ENCODE measurements at regions of chr16 and their contacts with region 1.

Region 1: DNA sequence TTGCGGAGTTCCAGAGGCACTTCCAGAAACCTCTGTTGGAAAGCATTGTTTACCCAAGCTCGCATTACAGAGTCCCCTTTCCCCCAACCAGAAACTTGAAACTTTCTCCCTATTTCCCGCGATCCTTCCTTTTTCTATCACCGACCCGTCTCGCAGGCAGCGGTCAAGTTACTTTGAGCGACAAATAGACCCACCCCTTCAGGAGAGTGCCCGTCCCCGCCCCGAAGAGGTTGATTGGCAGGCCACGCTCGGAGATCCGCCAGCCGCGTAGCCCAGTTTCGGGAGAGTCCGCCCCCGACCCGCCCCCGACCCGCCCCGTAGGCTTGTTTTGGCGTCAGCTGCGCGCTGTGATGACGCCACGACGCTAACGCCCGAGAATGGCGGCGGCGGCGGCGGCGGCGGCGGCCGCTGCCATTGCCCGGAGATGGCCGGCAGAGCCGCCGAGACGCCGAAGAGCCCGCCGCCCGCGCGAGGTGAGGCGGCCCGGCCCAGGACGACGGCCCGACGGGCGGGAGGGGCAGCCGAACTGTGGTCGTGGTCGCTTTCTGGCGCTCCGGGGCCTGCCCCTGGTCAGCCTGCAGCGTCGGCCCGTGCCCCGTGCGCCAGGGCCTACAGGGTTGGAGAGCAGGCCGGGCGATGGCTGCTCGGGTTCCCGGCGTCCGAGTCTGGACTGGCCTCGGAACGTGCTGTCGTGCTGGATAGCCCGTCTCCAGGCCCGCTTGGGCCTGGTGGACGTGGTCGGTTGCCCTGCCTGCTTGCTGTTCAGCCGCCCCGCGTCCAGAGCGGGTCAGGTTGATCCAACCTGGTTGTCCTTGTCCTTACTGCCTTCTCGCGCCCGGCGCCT is at the start of gene PSKH1:
- DNase-seq: peak; percentile 95
- ATAC-seq: peak; percentile 94
- H3K4me3 ChIP-seq: peak within 1 kb of the TSS; percentile 93 to 99 (median 98)
- H3K27ac ChIP-seq: peak within 1 kb of the TSS; percentile 90
- H3K4me1 ChIP-seq: peaks cover 43% of the 10 kb centered on the region
- H3K27me3 ChIP-seq: no peaks in the 10 kb centered on the region; a peak in 1 of 5 replicates
- CTCF ChIP-seq: peak; percentile 12; the same call in 1 of the 2 replicates
- EP300 ChIP-seq: no peak
- POLR2A ChIP-seq: peak; percentile 46 to 66; a peak in 3 of 4 replicates
- RAD21 ChIP-seq: peak; percentile 67
- total RNA-seq, gene PSKH1: 8.4 and 12.9 TPM in 2 replicates

Region 2: GRCh38 chr16:67872786-67873537 is 20.2 kb before region 1 on chr16 and contains the start of gene EDC4:
- CTCF ChIA-PET with region 1: no interaction called
- POLR2A ChIA-PET with region 1: interaction called, 4 read pairs
- in situ Hi-C with region 1: no loop called
- intact Hi-C with region 1: loop called (anchors 1 kb)
- DNase-seq: peak; percentile 65
- ATAC-seq: peak; percentile 87
- H3K4me3 ChIP-seq: peak within 1 kb of the TSS; percentile 85 to 98 (median 87)
- H3K27ac ChIP-seq: peak within 1 kb of the TSS; percentile 66
- H3K4me1 ChIP-seq: peaks cover 30% of the 10 kb centered on the region
- H3K27me3 ChIP-seq: no peaks in the 10 kb centered on the region; a peak in 1 of 5 replicates
- CTCF ChIP-seq: peak; percentile 43
- EP300 ChIP-seq: peak in 1 of 2 experiments; percentile 71; a peak in 3 of 4 replicates
- POLR2A ChIP-seq: peak; percentile 68 to 87
- RAD21 ChIP-seq: peak; percentile 83
- total RNA-seq, gene EDC4: 53.4 and 59.1 TPM in 2 replicates

Region 3: GRCh38 chr16:67915831-67916723 is 23.0 kb after region 1 on chr16:
- CTCF ChIA-PET with region 1: no interaction called
- POLR2A ChIA-PET with region 1: interaction called, 10 read pairs
- in situ Hi-C with region 1: no loop called
- intact Hi-C with region 1: no loop called
- DNase-seq: peak; percentile 59
- ATAC-seq: peak; percentile 87
- H3K4me3 ChIP-seq: no peak overlapping the region
- H3K27ac ChIP-seq: peak overlapping the region; percentile 44
- H3K4me1 ChIP-seq: peaks cover 34% of the 10 kb centered on the region
- H3K27me3 ChIP-seq: no peaks in the 10 kb centered on the region
- CTCF ChIP-seq: no peak
- EP300 ChIP-seq: no peak; a peak in 1 of 4 replicates
- POLR2A ChIP-seq: no peak
- RAD21 ChIP-seq: no peak

Region 4: DNA sequence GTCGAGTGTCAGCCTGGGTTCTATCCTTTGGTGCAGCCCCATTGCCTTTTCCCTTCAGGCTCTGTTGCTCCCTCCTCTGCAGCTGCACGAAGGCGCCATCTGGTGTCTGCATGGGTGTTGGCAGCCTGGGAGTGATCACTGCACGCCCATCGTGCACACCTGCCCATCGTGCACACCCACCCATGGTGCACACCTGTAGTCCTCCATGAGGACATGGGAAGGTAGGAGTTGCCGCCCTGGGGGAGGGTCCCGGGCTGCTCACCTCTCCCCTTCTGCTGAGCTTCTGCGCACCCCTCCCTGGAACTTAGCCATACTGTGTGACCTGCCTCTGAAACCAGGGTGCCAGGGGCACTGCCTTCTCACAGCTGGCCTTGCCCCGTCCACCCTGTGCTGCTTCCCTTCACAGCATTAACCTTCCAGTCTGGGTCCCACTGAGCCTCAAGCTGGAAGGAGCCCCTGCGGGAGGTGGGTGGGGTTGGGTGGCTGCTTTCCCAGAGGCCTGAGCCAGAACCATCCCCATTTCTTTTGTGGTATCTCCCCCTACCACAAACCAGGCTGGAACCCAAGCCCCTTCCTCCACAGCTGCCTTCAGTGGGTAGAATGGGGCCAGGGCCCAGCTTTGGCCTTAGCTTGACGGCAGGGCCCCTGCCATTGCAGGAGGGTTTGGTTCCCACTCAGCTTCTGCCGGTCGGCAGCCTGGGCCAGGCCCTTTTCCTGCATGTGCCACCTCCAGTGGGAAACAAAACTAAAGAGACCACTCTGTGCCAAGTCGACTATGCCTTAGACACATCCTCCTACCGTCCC is 35.6 kb after region 1 on chr16:
- CTCF ChIA-PET with region 1: interaction called, 3 read pairs
- POLR2A ChIA-PET with region 1: interaction called, 32 read pairs
- in situ Hi-C with region 1: loop called (anchors 5 kb)
- intact Hi-C with region 1: loop called (anchors 2 kb)
- DNase-seq: peak; percentile 69
- ATAC-seq: peak; percentile 71
- H3K4me3 ChIP-seq: no peak overlapping the region
- H3K27ac ChIP-seq: no peak overlapping the region
- H3K4me1 ChIP-seq: peaks cover 3% of the 10 kb centered on the region
- H3K27me3 ChIP-seq: no peaks in the 10 kb centered on the region
- CTCF ChIP-seq: peak; percentile 99
- EP300 ChIP-seq: no peak
- POLR2A ChIP-seq: 0 out of 4 replicates have a peak, but pooled peaks of 1 of the 2 experiments have one; percentile 8
- RAD21 ChIP-seq: peak; percentile 98

Region 5: GRCh38 chr16:68737046-68737729 is 844.1 kb after region 1 on chr16 and contains the start of gene CDH1:
- CTCF ChIA-PET with region 1: no interaction called
- POLR2A ChIA-PET with region 1: no interaction called
- in situ Hi-C with region 1: no loop called
- intact Hi-C with region 1: no loop called
- DNase-seq: no peak
- ATAC-seq: peak; percentile 48
- H3K4me3 ChIP-seq: peak within 1 kb of the TSS; percentile 48 to 78 (median 60)
- H3K27ac ChIP-seq: no peak within 1 kb of the TSS
- H3K4me1 ChIP-seq: peaks cover 91% of the 10 kb centered on the region
- H3K27me3 ChIP-seq: peaks cover 1 to 26% of the 10 kb centered on the region in 2 experiments; a peak in 3 of 5 replicates
- CTCF ChIP-seq: no peak
- EP300 ChIP-seq: no peak
- POLR2A ChIP-seq: 0 out of 4 replicates have a peak, but pooled peaks of 1 of the 2 experiments have one; percentile 38
- RAD21 ChIP-seq: peak; percentile 32; the same call in 1 of the 2 replicates
- total RNA-seq, gene CDH1: 0.70 and 0.95 TPM in 2 replicates

Region 6: DNA sequence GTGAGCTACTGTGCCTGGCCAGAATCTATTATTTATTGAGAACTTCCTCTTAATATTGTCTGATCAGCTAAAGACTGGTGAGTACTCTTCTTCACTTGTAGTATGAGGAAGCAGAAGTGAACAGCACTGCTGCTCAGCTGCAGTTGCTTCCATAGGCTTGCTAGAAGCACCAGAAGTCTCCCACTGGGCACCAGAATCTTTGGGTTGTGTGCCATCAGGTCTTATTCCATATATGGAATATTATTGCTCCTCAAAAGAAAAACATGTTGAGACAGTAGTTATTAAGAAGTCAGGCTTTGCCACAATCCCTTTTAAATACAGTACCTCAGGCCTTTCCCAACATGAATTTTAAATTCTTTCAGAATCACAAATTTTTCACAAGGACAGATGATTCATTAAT is 1311.1 kb after region 1 on chr16:
- CTCF ChIA-PET with region 1: no interaction called
- POLR2A ChIA-PET with region 1: no interaction called
- in situ Hi-C with region 1: no loop called
- intact Hi-C with region 1: no loop called
- DNase-seq: no peak
- ATAC-seq: no peak
- H3K4me3 ChIP-seq: no peak overlapping the region
- H3K27ac ChIP-seq: no peak overlapping the region
- H3K4me1 ChIP-seq: peaks cover 14% of the 10 kb centered on the region; the same call in 1 of the 2 replicates
- H3K27me3 ChIP-seq: no peaks in the 10 kb centered on the region
- CTCF ChIP-seq: no peak
- EP300 ChIP-seq: no peak
- POLR2A ChIP-seq: no peak
- RAD21 ChIP-seq: no peak

Measured in HepG2 (cell line).